Panc1 (cell line): ENCODE measurements at regions of chr4 and their contacts with region 1.

Region 1: DNA sequence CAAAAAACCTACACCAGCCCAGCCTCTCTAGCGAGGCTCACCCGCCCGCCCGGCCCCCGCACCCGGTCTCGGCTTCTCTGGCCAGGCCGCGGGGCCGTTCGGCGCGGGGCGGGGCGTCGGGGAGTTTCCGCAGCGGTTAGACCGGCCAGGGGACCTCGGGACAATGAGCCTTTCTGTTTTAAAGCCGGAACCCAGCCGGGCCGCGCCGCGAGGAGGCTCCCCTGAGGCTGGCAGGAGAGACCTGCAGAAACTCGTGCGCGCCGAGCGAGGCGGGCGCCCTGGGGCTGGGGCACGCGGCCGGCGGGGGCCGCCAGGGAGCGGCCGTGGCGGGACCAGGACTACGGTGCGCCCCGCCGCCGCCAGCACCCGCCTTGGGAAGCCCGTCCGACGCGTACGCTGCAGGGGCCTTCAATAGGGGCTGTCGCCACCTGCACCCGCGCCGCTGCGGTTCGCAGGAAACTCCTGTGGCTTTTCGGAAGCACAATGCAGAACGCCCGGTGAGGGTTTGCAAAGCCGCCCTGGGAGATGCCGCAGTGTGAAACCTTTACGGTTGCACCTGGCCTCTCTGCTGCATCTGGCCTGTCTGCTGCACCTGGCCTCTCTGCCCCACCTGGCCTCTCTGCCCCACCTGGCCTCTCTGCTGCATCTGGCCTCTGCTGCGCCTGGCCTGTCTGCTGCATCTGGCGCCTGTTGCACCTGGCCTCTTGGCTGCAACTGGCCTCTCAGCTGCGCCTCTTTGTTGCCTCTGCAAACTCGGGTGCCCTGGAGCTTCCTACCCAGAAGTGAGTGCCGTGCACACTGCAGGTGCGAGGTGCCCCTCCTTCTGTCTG is 63.9 kb downstream of the TRAPPC11 start:
- DNase-seq: no peak
- ATAC-seq: peak; percentile 65
- H3K4me3 ChIP-seq: peak overlapping the region; percentile 40 to 61
- H3K27ac ChIP-seq: no peak overlapping the region; the same call in 1 of the 2 replicates
- H3K4me1 ChIP-seq: peaks cover 6% of the 10 kb centered on the region; the same call in 1 of the 2 replicates
- H3K27me3 ChIP-seq: no peaks in the 10 kb centered on the region
- CTCF ChIP-seq: no peak; the same call in 1 of the 2 replicates

Region 2: GRCh38 chr4:183571350-183571941 is 151.5 kb before region 1 on chr4:
- CTCF ChIA-PET with region 1: no interaction called
- POLR2A ChIA-PET with region 1: interaction called, 11 read pairs
- in situ Hi-C with region 1: no loop called
- intact Hi-C with region 1: no loop called
- DNase-seq: no peak
- ATAC-seq: no peak
- H3K4me3 ChIP-seq: no peak overlapping the region
- H3K27ac ChIP-seq: no peak overlapping the region
- H3K4me1 ChIP-seq: no peaks in the 10 kb centered on the region
- H3K27me3 ChIP-seq: no peaks in the 10 kb centered on the region
- CTCF ChIP-seq: no peak

Region 3: DNA sequence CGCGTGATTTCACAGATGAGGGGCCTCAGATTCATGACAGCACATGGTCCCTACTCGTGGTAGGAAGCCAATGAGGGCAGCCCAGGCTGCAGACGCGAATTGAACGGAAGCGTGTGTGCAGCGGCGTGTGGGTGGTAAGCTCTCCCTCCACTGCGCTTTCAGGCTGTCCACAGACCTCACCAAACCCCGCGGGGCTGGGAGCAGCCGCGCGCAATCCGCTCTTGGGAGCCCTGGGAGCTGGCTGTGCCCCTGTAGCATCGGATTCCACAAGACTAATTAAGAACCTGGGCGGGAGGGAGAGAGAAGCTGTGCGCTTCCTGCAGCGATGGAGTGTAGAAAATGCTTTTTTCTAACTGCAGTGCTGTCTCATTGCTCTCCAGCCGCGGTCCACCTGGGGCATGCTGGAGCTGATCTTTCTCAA is 317.0 kb after region 1 on chr4:
- CTCF ChIA-PET with region 1: no interaction called
- POLR2A ChIA-PET with region 1: no interaction called
- in situ Hi-C with region 1: no loop called
- intact Hi-C with region 1: no loop called
- DNase-seq: no peak
- ATAC-seq: no peak
- H3K4me3 ChIP-seq: no peak overlapping the region
- H3K27ac ChIP-seq: no peak overlapping the region
- H3K4me1 ChIP-seq: no peaks in the 10 kb centered on the region
- H3K27me3 ChIP-seq: no peaks in the 10 kb centered on the region; the same call in 1 of the 2 replicates
- CTCF ChIP-seq: no peak